ENCODE measurements at regions of chr10 and their contacts with region 1.

Region 1: GRCh38 chr10:21495752-21496342 is 29.6 kb downstream of the SKIDA1 start:
- DNase-seq: peak; percentile 97
- H3K4me3 Mint-ChIP-seq: peak overlapping the region; percentile 89
- H3K27ac Mint-ChIP-seq: peak overlapping the region; percentile 45
- H3K4me1 Mint-ChIP-seq: peaks cover 17% of the 10 kb centered on the region
- H3K27me3 Mint-ChIP-seq: peaks cover 74% of the 10 kb centered on the region

Region 2: DNA sequence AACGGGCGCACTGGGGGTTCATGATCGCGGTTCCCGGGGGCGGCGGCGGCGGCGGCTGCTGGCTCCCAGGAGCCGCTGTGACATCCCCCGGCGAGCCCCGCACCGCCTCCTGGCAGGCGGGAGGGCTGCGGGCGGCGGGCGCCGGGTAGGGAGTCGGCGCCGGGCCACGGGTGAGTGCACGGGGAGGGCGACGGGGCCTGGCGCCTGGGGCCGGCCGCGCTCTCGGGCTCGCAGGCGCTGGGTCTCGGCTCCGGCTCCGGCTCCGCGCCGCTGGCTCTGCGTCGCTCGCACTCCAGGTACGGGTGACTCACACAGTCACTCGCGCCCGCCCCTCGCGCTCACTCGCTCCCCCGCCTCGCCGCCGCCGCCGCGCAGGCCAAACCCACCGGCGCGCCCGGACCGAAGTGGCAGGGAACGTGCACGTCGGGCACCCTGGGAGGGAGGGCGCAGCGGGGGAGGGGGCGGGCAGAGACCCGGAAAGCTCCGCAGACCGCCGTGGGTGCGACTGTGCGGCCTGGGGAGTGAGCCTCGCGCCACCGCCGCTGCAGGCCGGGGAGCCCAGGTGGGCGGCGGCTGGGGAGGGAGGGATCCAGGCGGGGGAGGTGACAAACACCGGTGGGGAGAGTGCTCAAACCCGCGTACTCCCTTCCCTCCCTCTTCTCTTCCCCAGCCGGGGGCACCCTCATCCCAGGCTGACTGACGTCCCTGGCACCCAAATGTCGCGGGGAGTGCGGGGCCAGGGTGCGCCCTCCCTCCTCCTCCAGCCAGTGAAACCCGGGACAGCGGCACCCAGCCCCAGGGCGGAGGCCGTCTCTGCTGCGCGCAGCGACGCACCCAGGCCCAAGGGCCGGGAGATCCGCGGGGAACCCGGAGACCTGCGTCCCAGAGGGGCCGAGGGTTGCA is 321.8 kb before region 1 on chr10:
- intact Hi-C with region 1: loop called (anchors 10 kb)
- DNase-seq: peak; percentile 63
- H3K4me3 Mint-ChIP-seq: peak overlapping the region; percentile 64
- H3K27ac Mint-ChIP-seq: no peak overlapping the region
- H3K4me1 Mint-ChIP-seq: peaks cover 3% of the 10 kb centered on the region
- H3K27me3 Mint-ChIP-seq: peaks cover 50% of the 10 kb centered on the region

Region 3: DNA sequence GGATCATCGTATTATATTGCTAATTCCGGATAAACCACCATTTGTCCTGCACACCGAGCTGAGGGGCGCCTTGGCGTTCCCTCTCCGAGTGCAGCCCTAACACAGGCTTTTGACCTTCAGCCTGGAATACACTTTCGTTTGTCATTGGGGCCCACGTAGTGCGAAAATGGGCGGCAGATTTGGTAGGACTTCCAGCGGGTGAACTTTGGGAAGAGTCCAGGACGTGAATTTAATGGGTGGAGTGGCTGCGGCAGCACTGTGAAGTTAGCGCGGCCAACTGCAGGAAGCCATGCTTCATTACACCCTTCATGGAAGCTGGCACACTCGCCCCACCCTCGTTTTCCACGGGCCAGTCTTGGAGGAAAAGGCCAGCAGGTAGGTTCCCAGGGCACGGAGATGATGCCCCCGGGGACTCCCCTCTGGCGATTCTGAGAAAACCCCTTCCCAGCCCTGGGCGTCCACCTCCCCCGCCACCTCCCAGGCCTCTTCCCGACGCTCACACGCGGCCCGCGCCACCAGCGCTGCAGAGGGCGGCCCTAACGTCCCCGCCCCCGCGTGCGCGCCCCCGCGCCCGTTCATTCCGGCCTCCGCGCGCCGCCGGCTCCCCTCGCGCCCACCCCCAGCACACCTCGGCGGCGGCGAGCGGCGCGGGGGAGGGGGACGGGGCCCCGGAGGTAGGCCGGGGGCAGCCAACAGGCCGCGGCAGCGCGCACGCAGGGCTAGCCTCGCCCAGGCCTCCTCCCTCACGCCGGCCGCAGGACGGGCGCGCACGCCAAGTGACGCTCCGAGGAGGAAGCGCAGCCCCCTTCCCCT is 37.8 kb after region 1 on chr10 and contains the start of gene MLLT10:
- intact Hi-C with region 1: loop called (anchors 2 kb)
- DNase-seq: peak; percentile 97
- H3K4me3 Mint-ChIP-seq: peak within 1 kb of the TSS; percentile 88
- H3K27ac Mint-ChIP-seq: peak within 1 kb of the TSS; percentile 93
- H3K4me1 Mint-ChIP-seq: peaks cover 23% of the 10 kb centered on the region
- H3K27me3 Mint-ChIP-seq: peaks cover 14% of the 10 kb centered on the region
- total RNA-seq, gene MLLT10: 40.2 and 42.0 TPM in 2 replicates

Region 4: GRCh38 chr10:21953585-21954057 is 457.8 kb after region 1 on chr10:
- intact Hi-C with region 1: loop called (anchors 1 kb)
- DNase-seq: no peak
- H3K4me3 Mint-ChIP-seq: no peak overlapping the region
- H3K27ac Mint-ChIP-seq: no peak overlapping the region
- H3K4me1 Mint-ChIP-seq: peaks cover 4% of the 10 kb centered on the region
- H3K27me3 Mint-ChIP-seq: no peaks in the 10 kb centered on the region

Region 5: GRCh38 chr10:22251751-22252223 is 755.9 kb after region 1 on chr10:
- intact Hi-C with region 1: loop called (anchors 5 kb)
- DNase-seq: peak; percentile 91
- H3K4me3 Mint-ChIP-seq: peak overlapping the region; percentile 91
- H3K27ac Mint-ChIP-seq: peak overlapping the region; percentile 98
- H3K4me1 Mint-ChIP-seq: peaks cover 31% of the 10 kb centered on the region
- H3K27me3 Mint-ChIP-seq: peaks cover 14% of the 10 kb centered on the region

Region 6: DNA sequence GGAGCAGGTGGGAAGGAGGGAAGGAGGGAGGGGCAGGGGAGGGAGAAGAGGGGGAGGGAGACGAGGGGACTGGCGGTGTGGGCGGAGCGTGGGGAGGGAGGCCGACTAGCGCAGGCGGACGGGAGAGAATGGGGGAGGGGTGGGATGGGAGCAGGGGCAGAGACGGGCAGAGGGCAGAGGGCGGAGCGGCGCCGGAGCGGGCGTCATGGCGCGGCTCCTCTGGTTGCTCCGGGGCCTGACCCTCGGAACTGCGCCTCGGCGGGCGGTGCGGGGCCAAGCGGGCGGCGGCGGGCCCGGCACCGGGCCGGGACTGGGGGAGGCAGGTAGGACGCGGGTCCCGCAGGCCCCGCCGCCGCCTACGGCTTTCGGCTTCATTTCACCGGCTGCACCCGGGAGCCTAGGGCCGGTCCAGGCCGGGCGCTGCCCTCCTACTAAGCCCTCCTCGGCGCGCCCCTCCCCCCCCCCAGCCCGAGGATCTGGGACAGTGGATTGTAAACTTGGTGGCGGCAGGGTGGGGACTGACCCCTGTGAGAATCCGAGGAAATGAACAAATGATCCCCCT is 1599.6 kb after region 1 on chr10 and contains the start of gene MSRB2:
- intact Hi-C with region 1: loop called (anchors 5 kb)
- DNase-seq: peak; percentile 90
- H3K4me3 Mint-ChIP-seq: peak within 1 kb of the TSS; percentile 89
- H3K27ac Mint-ChIP-seq: peak within 1 kb of the TSS; percentile 93
- H3K4me1 Mint-ChIP-seq: peaks cover 40% of the 10 kb centered on the region
- H3K27me3 Mint-ChIP-seq: peaks cover 18% of the 10 kb centered on the region
- total RNA-seq, gene MSRB2: 3.3 and 3.9 TPM in 2 replicates

Measured in activated CD4-positive, alpha-beta T cell treated with anti-CD3 and anti-CD28 coated beads, Interleukin-2, amount 10 ng/mL, durations not matched to agents 24 days and 14 days (primary cell).